ENCODE measurements at regions of chr7 and their contacts with region 1.

Region 1: DNA sequence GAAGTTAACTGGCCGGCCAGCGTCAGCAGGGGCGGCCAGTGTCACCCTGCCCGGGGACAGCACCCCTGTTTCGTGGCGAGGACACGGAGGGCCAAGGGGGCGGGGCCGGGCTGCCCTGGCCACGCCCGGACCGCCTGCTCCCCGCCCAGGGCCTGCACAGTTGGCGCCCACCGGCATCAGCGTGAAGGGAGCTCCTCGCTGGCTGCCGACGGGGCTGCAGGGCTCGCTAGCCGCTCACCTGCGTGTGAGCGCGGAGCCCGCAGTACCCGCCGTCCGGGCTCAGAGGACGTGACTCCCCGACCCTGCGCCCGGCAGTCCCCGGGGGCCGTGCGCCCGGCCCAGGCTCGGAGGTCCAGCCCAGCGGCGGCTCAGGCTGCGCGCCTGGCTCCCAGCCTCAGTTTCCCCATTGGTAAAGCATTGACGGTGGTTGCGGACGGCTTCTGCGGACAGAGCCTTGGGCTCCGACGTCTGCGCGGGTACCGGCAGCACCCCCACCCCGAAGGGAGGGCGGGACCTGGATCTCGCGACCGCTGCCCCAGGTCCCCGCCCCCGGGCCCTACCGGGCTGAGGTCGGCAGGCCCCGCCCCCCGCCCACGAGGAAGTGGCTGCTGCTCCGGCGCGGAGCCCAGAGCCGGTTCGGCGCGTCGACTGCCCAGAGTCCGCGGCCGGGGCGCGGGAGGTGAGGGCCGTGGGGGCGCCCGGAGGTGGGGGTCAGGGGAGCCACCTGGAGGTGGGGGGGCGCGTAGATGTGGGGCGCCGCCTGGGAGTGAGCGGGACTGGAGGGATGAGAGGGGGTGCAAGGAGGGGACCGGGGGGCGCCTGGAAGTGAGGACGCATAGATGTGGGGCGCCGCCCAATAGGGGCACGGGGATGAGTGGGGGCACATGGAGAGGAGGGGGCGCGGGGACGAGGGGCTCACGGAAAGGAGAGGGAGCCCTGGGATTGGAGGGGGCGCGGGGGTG is at the start of gene ARPC1B:
- DNase-seq: peak; percentile 74
- ATAC-seq: peak; percentile 74
- H3K4me3 Mint-ChIP-seq: peak within 1 kb of the TSS; percentile 84
- H3K27ac Mint-ChIP-seq: 0 out of 2 replicates have a peak within 1 kb of the TSS, but pooled peaks have one; percentile 65
- H3K4me1 Mint-ChIP-seq: peaks cover 15% of the 10 kb centered on the region
- H3K27me3 Mint-ChIP-seq: peaks cover 12% of the 10 kb centered on the region
- CTCF ChIP-seq: no peak
- total RNA-seq, gene ARPC1B: 63.3 to 70.2 TPM (median 66.2 TPM) in 3 replicates

Region 2: GRCh38 chr7:99155213-99155612 is 219.2 kb before region 1 on chr7:
- CTCF ChIA-PET with region 1: no interaction called
- POLR2A ChIA-PET with region 1: interaction called, 14 read pairs
- DNase-seq: no peak
- ATAC-seq: no peak
- H3K4me3 Mint-ChIP-seq: no peak overlapping the region
- H3K27ac Mint-ChIP-seq: no peak overlapping the region
- H3K4me1 Mint-ChIP-seq: no peaks in the 10 kb centered on the region; the same call in 1 of the 2 replicates
- H3K27me3 Mint-ChIP-seq: peaks cover 7% of the 10 kb centered on the region; the same call in 1 of the 2 replicates
- CTCF ChIP-seq: no peak

Region 3: DNA sequence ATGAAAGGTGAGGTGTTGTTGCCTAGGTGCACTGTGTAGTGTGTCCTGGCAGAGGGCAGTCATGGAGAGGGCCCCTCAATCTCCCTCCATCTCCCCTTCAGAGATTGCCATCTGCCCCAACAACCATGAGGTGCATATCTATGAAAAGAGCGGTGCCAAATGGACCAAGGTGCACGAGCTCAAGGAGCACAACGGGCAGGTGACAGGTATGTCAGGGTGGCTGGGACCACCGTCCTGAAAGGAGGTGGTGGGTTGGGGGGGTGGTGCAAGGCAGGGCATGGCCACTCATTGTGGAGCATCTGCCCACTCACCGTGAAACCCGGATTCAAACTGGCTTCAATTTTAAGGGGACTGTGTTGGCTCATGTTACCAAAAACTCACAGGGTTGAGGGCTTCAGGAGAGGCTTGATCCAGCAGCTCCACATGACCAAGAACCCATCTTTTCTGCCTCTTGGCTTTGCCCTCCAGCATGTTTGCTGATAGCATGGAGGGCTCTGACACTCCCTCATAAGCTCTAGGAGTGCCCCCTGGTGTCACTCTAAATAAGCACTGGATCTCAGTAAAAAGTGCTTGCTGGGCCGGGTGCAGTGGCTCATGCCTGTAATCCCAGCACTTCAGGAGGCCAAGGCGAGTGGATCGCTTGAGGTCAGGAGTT is 12.3 kb after region 1 on chr7:
- CTCF ChIA-PET with region 1: interaction called, 10 read pairs
- POLR2A ChIA-PET with region 1: no interaction called
- DNase-seq: no peak
- ATAC-seq: peak; percentile 73
- H3K4me3 Mint-ChIP-seq: no peak overlapping the region
- H3K27ac Mint-ChIP-seq: no peak overlapping the region
- H3K4me1 Mint-ChIP-seq: no peaks in the 10 kb centered on the region
- H3K27me3 Mint-ChIP-seq: no peaks in the 10 kb centered on the region
- CTCF ChIP-seq: no peak